Naive thymus-derived CD4-positive, alpha-beta T cell (primary cell): ENCODE measurements at regions of chr11 and their contacts with region 1.

Region 1: DNA sequence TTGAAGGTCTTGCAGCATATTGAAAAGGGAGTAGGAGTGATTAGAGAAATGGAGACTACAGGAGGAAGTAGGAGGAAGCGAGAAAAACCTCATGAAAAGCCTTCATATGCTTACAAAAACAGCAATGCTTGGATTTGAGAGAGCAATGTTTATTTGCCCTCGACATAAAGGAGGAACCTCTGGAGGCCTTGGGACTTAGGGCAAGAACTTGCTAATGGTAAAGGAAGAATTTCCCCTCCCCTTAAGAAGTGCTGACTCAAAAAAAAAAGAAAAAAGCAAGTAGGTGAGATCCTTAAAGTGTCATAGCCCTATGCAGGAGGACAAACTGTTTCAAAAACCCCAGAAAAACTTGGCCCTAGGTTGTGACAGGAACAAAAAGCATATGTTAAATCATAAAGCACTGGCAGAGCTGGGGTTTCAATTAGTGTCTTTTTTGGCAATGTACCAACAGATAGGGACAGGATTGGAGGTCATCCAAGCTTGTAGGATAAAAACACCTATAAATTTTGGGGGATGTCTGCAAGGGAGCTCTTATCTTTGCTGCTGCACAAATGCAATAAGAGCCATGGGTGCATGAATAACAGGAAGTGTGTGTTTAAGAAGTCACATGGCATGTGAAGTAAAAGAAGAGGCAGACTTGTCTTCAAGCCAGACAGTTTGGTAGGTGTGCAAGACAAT is 4.9 kb downstream of the GLYAT start:
- DNase-seq: peak in 7 of 9 donors; percentile 39 to 79 (median 73)
- ATAC-seq: peak; percentile 84
- H3K4me3 ChIP-seq: no peak overlapping the region
- H3K4me3 Mint-ChIP-seq: peak overlapping the region; percentile 33 to 86 (median 62)
- H3K27ac ChIP-seq: peak overlapping the region; percentile 60
- H3K27ac Mint-ChIP-seq: peak overlapping the region; percentile 58 to 99 (median 97)
- H3K4me1 ChIP-seq: peaks cover 4 to 41% of the 10 kb centered on the region in 2 donors
- H3K4me1 Mint-ChIP-seq: peaks cover 16 to 67% (median 54%) of the 10 kb centered on the region in 7 donors
- H3K27me3 ChIP-seq: no peaks in the 10 kb centered on the region
- H3K27me3 Mint-ChIP-seq: no peaks in the 10 kb centered on the region

Region 2: DNA sequence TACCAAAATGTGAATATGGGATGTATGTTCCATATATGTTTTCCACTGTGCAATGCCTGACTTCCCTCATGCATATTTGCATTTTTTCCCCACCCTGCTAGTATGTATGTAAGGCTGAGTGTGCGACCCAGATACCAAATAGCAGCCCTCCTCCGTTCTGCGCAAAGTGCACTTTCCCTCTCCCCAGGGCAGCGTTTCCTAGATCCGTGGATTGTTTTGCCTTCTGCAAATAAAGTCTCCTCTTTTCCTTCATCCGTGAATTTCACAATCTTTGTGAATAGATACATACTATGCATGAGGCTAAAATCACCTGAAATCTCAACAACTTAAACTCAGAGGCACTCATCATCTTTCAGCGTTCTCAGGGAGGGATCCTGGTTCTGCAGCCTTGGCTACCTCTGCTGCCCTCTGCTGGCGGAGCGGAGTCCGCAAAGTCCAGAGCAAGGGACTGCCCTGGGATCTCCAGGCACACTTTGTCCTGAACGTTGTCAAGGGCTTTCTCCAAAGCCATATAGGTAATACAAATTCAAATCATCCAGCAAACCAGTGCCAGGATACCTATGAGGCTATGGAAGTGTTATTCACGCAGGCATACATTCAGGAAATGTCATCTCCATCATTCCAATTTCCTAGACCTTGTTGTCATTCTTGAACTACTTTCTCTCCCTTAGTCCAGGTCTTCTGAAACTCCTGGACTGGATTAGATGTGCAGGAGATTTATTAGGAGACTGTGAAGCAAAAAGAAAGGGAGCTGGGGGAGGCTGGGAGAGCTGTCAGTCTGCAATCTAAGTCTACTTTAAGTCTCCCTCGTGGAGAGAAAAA is 51.3 kb before region 1 on chr11:
- CTCF ChIA-PET with region 1: interaction called, 3 read pairs
- POLR2A ChIA-PET with region 1: interaction called, 5 read pairs
- intact Hi-C with region 1: loop called in 1 of 2 experiments (anchors 1 kb)
- DNase-seq: peak; percentile 37 to 75 (median 65)
- ATAC-seq: peak; percentile 83
- H3K4me3 ChIP-seq: no peak overlapping the region
- H3K4me3 Mint-ChIP-seq: no peak overlapping the region
- H3K27ac ChIP-seq: no peak overlapping the region
- H3K27ac Mint-ChIP-seq: no peak overlapping the region
- H3K4me1 ChIP-seq: no peaks in the 10 kb centered on the region
- H3K4me1 Mint-ChIP-seq: no peaks in the 10 kb centered on the region
- H3K27me3 ChIP-seq: peaks cover 0 to 4% of the 10 kb centered on the region in 2 donors
- H3K27me3 Mint-ChIP-seq: peaks cover 0 to 5% (median 0%) of the 10 kb centered on the region in 5 donors

Region 3: DNA sequence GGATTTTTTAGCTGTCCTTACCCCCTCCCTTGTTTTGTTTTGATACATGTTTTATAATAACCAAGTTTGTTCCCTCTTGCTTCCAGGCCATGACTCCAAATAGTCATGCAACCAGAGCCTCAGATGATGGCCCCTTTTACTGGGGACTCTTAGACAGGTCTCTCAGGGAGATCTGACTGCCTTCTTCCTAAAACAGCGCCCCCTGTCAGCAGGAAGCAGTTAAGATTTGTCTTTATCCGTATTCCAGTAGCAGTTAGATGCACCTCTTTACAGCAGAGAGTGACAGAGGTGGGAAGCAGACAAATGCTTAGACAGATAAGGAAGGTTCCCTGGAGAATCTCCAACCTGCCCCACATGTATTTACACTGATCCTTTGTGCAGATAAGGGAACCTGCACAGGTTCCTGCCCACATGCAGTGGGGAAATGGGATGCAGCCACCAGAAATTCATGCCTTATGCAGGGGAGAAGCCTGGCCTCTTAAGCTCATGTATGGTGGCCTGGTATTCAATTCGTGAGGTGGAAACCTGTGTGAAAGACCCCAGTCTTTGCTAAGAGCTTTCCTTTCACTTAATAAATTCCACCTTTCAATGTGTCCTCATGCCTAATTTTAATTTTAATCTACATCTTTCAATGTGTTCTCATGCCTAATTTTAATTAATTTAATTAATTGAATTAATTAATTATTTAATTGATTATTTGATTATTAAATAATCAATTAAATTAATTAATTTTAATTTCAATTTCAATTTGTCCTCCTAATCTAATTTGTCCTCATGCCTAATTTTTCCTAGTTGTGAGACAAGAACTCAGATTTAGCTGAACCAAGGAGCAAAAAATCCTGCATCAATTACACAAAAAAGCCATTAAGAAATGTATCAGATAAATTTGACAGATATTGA is 16.4 kb after region 1 on chr11:
- CTCF ChIA-PET with region 1: interaction called, 3 read pairs
- POLR2A ChIA-PET with region 1: interaction called, 11 read pairs
- intact Hi-C with region 1: no loop called
- DNase-seq: no peak
- ATAC-seq: no peak
- H3K4me3 ChIP-seq: no peak overlapping the region
- H3K4me3 Mint-ChIP-seq: peak overlapping the region in 1 of 10 donors; percentile 5
- H3K27ac ChIP-seq: no peak overlapping the region
- H3K27ac Mint-ChIP-seq: peak overlapping the region in 2 of 9 donors; percentile 22 to 44
- H3K4me1 ChIP-seq: no peaks in the 10 kb centered on the region
- H3K4me1 Mint-ChIP-seq: peaks cover 2 to 19% (median 10%) of the 10 kb centered on the region in 7 donors
- H3K27me3 ChIP-seq: no peaks in the 10 kb centered on the region
- H3K27me3 Mint-ChIP-seq: peaks cover 0 to 5% (median 0%) of the 10 kb centered on the region in 5 donors

Region 4: DNA sequence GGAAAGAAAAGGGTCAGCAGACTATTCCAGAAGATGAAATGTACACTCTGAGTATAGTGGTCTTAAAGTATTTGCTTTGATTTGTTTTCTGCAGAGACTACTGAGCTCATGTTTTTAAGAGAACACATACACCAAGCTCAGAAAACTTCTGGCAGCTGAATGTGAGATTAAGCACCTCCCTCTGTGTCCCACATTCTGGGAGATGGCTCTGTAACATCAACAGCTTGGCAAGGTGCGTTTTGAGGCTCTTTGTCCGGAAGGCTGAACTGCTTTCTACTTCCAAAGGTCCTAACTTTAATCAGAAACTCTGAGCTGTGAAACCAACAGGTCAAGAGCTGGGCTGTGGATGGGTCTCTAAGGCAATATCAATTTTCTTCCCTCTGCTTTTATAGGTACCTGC is 41.3 kb after region 1 on chr11:
- CTCF ChIA-PET with region 1: no interaction called
- POLR2A ChIA-PET with region 1: interaction called, 6 read pairs
- intact Hi-C with region 1: loop called in 1 of 2 experiments (anchors 5 kb)
- DNase-seq: no peak
- ATAC-seq: no peak
- H3K4me3 ChIP-seq: no peak overlapping the region
- H3K4me3 Mint-ChIP-seq: no peak overlapping the region
- H3K27ac ChIP-seq: no peak overlapping the region
- H3K27ac Mint-ChIP-seq: peak overlapping the region in 1 of 9 donors; percentile 24
- H3K4me1 ChIP-seq: no peaks in the 10 kb centered on the region
- H3K4me1 Mint-ChIP-seq: peaks cover 0 to 8% (median 4%) of the 10 kb centered on the region in 7 donors
- H3K27me3 ChIP-seq: no peaks in the 10 kb centered on the region
- H3K27me3 Mint-ChIP-seq: peaks cover 0 to 11% (median 8%) of the 10 kb centered on the region in 5 donors